ENCODE measurements at regions of chr1 and their contacts with region 1.

Region 1: GRCh38 chr1:66331657-66332547 is 202.1 kb upstream of the SGIP1 start:
- DNase-seq: peak; percentile 55
- ATAC-seq: peak; percentile 19
- H3K4me3 Mint-ChIP-seq: peak overlapping the region; percentile 99
- H3K27ac Mint-ChIP-seq: peak overlapping the region; percentile 96
- H3K4me1 Mint-ChIP-seq: peaks cover 51% of the 10 kb centered on the region
- H3K27me3 Mint-ChIP-seq: no peaks in the 10 kb centered on the region

Region 2: DNA sequence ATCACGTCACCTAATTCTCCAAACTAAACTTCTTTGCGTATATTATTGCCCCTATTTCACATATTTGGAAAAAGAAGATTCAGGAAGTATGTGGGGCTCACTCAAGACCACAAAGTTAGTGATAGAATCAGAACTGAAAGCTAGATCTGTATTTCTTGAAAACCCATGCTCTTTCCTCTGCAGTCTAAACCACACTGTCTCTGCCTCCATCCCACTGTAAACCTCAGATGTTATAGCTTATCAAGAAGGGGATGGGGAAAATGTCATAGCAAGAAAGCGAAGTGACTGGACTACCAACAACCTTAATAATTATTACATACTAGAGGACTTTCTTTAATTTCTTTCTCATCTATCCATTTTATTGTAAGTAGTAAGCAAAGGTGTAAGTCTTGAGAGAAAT is 55.7 kb before region 1 on chr1:
- POLR2A ChIA-PET with region 1: interaction called, 33 read pairs
- DNase-seq: no peak
- ATAC-seq: peak; percentile 74
- H3K4me3 Mint-ChIP-seq: peak overlapping the region; percentile 82
- H3K27ac Mint-ChIP-seq: peak overlapping the region; percentile 91
- H3K4me1 Mint-ChIP-seq: peaks cover 82% of the 10 kb centered on the region
- H3K27me3 Mint-ChIP-seq: no peaks in the 10 kb centered on the region

Region 3: DNA sequence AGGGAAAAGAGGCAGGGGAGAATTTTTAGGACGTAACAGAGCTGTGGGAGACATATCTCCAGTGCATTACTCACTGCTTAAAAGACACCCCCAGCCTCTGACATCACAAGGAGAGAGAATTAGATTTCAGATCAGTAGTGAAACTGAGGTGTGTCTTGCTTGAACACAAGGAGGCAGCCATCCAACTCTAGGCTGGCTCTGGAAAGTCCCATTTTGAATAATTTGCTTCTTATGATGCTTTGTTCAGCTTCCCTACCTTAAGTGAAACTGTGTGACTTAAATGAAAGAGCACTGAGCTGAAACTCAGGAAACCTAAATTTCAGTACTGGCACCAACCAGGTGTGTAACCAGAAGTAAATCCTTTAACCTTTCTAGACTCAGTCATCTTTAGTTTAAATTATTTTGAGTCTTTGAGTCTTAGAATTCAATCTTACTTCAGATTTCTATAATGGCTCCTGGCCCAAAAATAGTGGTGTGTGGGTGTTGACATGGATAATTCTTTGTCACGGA is 49.5 kb before region 1 on chr1:
- POLR2A ChIA-PET with region 1: interaction called, 15 read pairs
- DNase-seq: no peak
- ATAC-seq: peak; percentile 91
- H3K4me3 Mint-ChIP-seq: no peak overlapping the region
- H3K27ac Mint-ChIP-seq: peak overlapping the region; percentile 75
- H3K4me1 Mint-ChIP-seq: peaks cover 71% of the 10 kb centered on the region
- H3K27me3 Mint-ChIP-seq: no peaks in the 10 kb centered on the region

Region 4: DNA sequence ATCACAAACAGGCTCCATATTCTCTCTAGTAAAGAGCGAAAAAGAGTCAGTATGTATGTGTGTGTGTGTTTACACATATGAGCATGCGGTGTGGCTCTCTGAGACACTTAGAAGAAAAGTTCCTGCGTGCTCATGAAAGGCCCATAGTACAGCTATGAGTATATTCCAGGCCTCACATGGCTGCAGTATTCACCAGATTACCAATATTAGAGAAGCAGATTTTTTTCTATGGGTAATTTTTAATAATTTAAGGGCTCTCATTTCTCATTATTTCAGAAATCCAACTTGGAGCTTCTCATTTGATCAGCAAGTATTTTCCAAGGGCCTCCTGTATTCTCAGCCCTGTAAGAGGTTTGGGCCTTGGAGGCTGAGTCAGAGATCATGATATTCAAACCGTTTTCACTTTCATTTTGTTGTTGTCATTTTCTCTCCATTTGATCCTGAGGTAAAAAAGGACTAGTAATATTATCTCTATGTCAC is 30.9 kb before region 1 on chr1:
- POLR2A ChIA-PET with region 1: interaction called, 30 read pairs
- DNase-seq: no peak
- ATAC-seq: peak; percentile 83
- H3K4me3 Mint-ChIP-seq: peak overlapping the region; percentile 83
- H3K27ac Mint-ChIP-seq: peak overlapping the region; percentile 89
- H3K4me1 Mint-ChIP-seq: peaks cover 32% of the 10 kb centered on the region
- H3K27me3 Mint-ChIP-seq: no peaks in the 10 kb centered on the region

Region 5: DNA sequence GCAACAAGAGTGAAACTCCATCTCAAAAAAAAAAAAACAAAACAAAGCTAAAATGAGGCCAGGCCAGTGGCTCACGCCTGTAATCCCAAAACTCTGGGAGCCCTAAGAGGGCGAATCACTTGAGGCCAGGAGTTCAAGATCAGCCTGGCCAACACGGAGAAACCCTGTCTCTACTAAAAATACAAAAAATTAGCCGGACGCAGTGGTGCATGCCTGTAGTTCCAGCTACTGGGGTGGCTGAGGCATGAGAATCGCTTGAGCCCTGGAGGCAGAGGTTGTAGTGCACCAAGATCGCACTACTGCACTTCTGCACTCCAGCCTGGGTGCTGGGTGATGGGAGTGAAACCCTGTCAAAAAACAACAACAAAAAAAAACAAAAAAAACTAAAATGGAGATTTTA is 10.8 kb after region 1 on chr1:
- POLR2A ChIA-PET with region 1: interaction called, 12 read pairs
- DNase-seq: no peak
- ATAC-seq: peak; percentile 30
- H3K4me3 Mint-ChIP-seq: peak overlapping the region; percentile 47
- H3K27ac Mint-ChIP-seq: peak overlapping the region; percentile 67
- H3K4me1 Mint-ChIP-seq: peaks cover 67% of the 10 kb centered on the region
- H3K27me3 Mint-ChIP-seq: no peaks in the 10 kb centered on the region

Region 6: DNA sequence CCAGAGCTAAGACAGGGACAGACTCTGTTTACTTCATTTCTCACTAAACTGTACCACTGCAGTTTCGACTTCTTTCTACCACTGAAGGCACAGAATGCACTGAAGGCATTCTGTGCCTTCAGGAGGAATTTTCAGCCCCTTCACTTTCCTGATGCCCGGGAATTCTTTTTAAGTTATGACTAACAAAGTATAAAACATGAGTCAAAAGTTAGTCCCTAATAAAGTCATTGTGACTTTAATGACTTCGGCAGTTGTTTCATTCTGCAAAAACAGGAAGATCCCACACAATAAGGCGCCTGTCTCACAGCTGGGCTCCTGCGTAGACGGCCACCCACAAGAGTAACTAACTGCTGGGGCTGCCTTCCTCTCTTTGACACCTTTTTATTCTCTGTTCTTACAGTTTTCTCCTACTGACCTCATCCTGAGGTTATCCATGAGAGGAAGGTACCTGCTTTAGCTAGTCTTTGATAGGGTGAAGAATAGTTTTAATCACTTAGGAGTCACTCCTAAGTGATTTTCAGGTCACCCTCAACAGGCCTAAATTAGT is 18.2 kb after region 1 on chr1:
- POLR2A ChIA-PET with region 1: interaction called, 32 read pairs
- DNase-seq: no peak
- ATAC-seq: peak; percentile 67
- H3K4me3 Mint-ChIP-seq: peak overlapping the region; percentile 83
- H3K27ac Mint-ChIP-seq: peak overlapping the region; percentile 91
- H3K4me1 Mint-ChIP-seq: peaks cover 78% of the 10 kb centered on the region
- H3K27me3 Mint-ChIP-seq: no peaks in the 10 kb centered on the region

Measured in activated naive CD8-positive, alpha-beta T cell treated with anti-CD3 and anti-CD28 coated beads, Interleukin-2, amount 10 ng/mL, durations not matched to agents 7 days and 5 days (primary cell).